BJ (cell line): ENCODE measurements at regions of chr1 and their contacts with region 1.

Region 1: DNA sequence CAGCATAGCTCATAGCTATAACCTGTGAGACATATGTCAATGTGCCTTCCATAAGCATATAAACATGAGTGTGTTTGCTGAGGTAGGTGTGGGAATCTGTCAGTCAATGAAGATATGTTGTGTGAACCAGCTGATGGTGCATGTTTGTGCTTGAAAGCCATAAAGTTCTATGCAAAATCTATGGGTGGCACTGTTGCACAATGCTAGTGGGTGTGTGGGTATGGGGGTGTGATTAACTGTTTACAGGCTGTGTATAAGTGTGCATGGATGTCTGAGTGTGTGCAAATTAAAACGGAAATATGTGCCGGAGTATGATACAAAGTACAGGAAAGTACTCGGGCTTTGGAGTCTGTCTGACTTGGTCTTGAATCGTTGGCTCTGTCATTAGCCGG is 1.0 kb upstream of the ATP2B4 start:
- DNase-seq: no peak
- H3K4me3 ChIP-seq: no peak overlapping the region
- H3K27me3 ChIP-seq: no peaks in the 10 kb centered on the region
- CTCF ChIP-seq: no peak

Region 2: GRCh38 chr1:203661572-203661971 is 35.9 kb after region 1 on chr1:
- CTCF ChIA-PET with region 1: no interaction called
- POLR2A ChIA-PET with region 1: interaction called, 16 read pairs
- DNase-seq: no peak
- H3K4me3 ChIP-seq: no peak overlapping the region
- H3K27me3 ChIP-seq: no peaks in the 10 kb centered on the region
- CTCF ChIP-seq: no peak

Region 3: DNA sequence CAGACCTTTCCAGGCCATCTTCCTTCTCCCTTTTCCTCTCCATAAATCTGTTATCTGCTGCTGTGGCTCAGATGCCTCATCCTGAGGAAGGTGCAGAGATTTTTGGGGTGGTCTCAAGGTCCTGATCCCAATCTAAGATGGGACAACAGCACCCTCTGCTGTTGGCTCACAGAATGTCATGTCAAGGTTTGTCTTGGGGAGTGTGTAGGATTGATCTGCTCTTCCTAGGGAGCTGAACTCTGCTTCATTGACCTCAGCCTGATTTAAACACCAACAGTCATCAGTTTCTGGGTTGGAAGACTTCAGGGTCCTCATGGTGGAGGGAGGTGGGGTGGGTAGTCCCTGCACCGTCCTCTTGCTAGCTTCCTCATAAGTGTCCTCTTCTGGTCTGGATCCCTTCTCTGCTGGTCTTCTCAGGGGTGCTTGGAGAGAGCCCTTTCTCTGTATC is 76.5 kb after region 1 on chr1:
- CTCF ChIA-PET with region 1: interaction called, 13 read pairs
- POLR2A ChIA-PET with region 1: no interaction called
- DNase-seq: no peak
- H3K4me3 ChIP-seq: no peak overlapping the region
- H3K27me3 ChIP-seq: no peaks in the 10 kb centered on the region
- CTCF ChIP-seq: peak; percentile 64